ENCODE measurements at regions of chr7 and their contacts with region 1.

Region 1: DNA sequence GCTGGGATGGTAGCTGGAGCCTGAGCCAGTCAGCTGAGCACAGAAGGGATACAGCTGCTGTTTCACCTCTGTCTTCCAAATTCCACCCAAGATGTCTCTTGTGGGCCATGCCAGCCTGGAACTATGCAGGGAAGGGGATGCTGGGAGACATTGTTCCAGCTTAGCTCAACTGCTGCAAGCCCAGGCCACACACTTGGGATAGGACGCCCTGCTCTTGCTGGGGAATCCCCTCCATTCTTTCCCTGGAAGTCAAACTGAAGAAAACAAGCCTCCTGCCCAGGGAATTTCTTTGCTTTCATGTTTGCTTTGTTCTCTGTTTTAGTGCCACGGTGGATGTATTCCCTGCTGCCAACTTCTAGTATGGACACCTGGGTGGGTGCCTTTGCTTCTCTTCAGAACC is 55.2 kb upstream of the CDK13 start:
- DNase-seq: no peak
- H3K4me3 Mint-ChIP-seq: no peak overlapping the region
- H3K27ac Mint-ChIP-seq: no peak overlapping the region
- H3K4me1 Mint-ChIP-seq: no peaks in the 10 kb centered on the region
- H3K27me3 Mint-ChIP-seq: peaks cover 2% of the 10 kb centered on the region

Region 2: DNA sequence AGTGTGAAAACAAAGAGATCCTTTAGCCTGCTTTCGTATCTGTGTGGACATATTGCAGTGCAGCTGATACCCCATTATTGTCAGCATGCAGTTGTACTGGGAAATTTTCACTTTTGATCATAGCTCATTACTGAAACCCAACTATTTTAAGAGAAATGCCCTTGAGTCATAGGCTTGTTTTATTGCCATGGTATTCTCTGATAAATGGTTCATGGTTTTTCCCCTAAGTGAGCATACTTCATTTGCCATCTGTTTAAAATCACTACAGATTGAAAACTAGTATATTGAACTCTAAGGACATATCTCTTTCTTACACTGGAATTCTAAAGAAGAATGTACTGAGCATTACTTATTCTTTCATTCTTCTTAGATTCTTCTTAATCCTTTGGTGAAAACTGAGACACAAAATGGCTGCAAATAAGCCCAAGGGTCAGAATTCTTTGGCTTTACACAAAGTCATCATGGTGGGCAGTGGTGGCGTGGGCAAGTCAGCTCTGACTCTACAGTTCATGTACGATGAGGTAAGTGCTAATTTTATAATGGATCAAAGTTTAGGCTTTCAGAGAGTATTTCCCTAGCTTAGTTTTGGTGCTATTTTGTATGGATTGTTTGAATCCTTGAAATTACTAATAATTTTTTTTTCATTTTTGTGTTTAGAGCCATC is 208.5 kb before region 1 on chr7:
- CTCF ChIA-PET with region 1: no interaction called
- POLR2A ChIA-PET with region 1: no interaction called
- intact Hi-C with region 1: no loop called
- DNase-seq: no peak
- H3K4me3 Mint-ChIP-seq: no peak overlapping the region
- H3K27ac Mint-ChIP-seq: peak overlapping the region; percentile 54
- H3K4me1 Mint-ChIP-seq: peaks cover 37% of the 10 kb centered on the region
- H3K27me3 Mint-ChIP-seq: no peaks in the 10 kb centered on the region

Region 3: GRCh38 chr7:40047661-40048060 is 152.8 kb after region 1 on chr7:
- CTCF ChIA-PET with region 1: interaction called, 223 read pairs
- POLR2A ChIA-PET with region 1: interaction called, 3 read pairs
- intact Hi-C with region 1: loop called (anchors 1 kb)
- DNase-seq: no peak
- H3K4me3 Mint-ChIP-seq: no peak overlapping the region
- H3K27ac Mint-ChIP-seq: no peak overlapping the region
- H3K4me1 Mint-ChIP-seq: peaks cover 3% of the 10 kb centered on the region
- H3K27me3 Mint-ChIP-seq: no peaks in the 10 kb centered on the region